Psoas muscle (tissue), 8 donors: ENCODE measurements at regions of chr14 and their contacts with region 1.

Region 1: DNA sequence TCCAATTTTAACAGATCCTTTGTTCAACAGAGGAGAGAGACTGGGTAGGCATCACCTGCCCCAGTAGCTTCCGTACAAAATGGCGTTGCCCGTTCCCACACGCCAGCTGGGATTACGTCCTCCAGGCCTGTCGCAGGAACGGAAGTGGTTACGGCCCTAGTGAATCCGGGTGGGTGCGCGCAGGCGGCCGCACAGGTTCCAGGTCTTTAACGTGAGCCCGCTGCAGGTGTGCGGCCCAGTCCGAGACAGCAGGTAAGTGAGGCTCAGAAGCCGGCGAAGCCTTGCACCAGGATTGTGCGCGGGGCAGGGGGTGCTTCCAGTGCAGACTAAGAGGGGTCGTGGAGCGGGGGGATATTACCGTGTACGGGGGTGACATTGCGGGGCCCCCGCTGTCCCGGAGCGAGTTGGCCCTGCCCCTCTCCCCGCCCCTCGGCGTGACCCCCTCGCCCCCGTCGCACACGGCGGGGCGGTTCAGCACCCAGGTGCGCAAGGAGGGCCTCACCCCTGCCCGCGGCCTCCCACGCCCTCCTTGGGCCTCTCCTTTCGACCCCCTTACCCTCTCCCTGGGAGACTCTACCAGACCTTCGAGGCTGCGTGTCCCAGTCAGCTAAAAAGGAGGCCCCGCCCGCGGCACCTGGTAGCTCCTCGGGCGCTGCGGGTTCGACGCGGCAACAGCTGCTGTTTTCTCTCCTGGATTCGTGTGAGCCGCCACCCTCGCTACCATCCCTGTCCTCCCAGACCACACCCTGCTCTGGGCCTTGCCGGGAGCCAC is at the start of gene EXD2:
- DNase-seq: peak; percentile 87 to 93
- ATAC-seq: peak; percentile 99
- H3K4me3 ChIP-seq: peak within 1 kb of the TSS; percentile 90
- H3K27ac ChIP-seq: peak within 1 kb of the TSS; percentile 88
- H3K4me1 ChIP-seq: peaks cover 9% of the 10 kb centered on the region
- H3K27me3 ChIP-seq: no peaks in the 10 kb centered on the region
- CTCF ChIP-seq: no peak
- total RNA-seq, gene EXD2: 12.6 to 17.3 (median 13.6) TPM

Region 2: DNA sequence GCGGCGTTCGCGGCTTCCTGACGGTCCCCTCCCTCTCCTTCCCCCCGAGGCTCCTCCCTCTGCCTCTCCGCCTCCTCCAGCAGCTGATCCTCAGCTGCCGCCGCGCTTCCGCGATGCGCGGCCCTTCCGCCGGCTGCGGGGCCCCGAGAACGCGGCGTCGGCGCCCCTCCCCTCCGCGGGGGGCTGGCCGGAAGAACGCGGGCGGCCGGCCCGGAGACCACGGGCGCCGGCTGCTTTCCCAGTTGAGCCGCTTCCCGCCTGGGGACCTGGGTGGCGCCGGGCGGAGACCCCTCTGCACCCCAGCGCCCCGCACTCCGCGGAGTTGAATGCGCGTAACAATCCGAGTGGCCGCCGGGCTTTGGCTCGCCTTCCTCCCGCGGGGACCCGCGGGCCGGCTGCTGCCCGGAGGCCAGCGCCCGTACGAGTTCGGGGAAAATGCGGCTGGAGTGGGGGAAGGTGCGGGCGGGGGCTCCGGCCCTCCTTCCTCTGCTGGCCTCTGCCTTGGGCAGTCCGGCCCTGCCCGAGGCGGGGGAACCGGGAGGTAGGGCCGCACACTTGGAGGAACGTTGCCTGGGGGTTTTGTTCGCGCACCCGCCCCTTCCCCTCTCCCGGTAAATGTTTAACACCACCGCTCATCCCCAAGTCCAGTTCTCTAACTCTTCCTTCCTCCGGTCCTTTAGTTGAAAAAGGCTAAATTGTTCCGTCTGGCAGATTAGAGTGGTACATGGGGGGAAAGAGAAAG is 38.2 kb before region 1 on chr14:
- intact Hi-C with region 1: loop called (anchors 5 kb)
- DNase-seq: peak; percentile 94 to 96
- ATAC-seq: peak; percentile 87 to 93 (median 92)
- H3K4me3 ChIP-seq: peak overlapping the region; percentile 98
- H3K27ac ChIP-seq: peak overlapping the region; percentile 97
- H3K4me1 ChIP-seq: peaks cover 23% of the 10 kb centered on the region
- H3K27me3 ChIP-seq: no peaks in the 10 kb centered on the region
- CTCF ChIP-seq: no peak

Region 3: DNA sequence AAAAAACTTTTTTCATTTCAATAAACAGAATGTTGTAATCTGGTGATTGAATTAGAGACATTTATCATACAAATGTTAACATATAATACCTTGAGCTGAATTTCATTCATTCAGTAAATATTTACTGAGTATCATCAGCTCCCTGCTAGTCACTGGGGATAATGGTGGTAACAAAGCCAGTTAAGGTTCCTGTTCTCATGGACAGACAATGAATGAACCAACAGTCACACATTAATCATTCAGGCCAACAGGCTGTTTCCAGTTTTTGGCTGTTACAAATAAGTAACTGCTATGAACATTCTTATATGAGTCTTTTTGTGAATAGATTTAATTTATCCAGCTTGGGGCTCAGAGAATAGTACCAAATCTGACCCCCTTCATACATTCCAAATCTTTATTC is 13.2 kb after region 1 on chr14:
- intact Hi-C with region 1: no loop called
- DNase-seq: no peak
- ATAC-seq: peak in 1 of 4 donors; percentile 48
- H3K4me3 ChIP-seq: no peak overlapping the region
- H3K27ac ChIP-seq: no peak overlapping the region
- H3K4me1 ChIP-seq: peaks cover 5% of the 10 kb centered on the region
- H3K27me3 ChIP-seq: no peaks in the 10 kb centered on the region
- CTCF ChIP-seq: no peak

Region 4: DNA sequence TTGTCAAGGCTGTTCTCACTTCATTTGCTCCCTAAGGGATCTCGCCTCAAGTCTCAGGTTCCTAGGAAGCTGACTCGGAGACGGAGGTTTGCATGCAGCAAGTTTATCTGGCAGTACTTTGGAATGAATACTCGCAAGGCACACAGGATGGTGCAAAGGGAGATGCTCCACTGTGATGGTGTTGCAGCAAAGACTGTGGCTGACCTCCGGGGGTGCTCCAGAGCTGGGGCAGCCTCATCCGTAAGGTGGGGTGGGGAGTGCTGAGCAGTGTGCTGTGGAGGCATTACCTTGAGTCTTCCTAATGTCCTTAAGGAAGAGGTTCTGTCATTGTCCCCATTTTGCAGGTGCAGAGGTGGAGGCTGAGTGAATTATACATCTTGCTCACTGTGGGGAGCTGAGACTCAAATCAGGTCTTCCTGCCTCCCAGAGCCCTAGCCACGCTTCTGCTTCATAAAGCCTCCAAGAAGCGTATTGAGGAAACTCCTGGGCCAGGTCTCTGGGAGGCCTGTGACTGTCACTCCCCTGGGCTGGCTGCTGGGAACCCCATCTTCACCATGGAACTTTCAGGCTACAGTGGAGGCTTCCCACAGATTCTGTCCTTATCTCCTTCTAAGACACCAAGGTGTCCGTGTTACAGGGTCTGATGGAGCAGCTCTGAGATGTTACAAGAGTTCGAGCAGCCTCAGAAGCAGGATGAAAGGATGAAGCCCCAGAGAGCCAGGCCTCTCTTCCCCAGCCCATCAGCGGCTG is 107.9 kb after region 1 on chr14:
- intact Hi-C with region 1: no loop called
- DNase-seq: no peak
- ATAC-seq: no peak
- H3K4me3 ChIP-seq: no peak overlapping the region
- H3K27ac ChIP-seq: no peak overlapping the region
- H3K4me1 ChIP-seq: no peaks in the 10 kb centered on the region
- H3K27me3 ChIP-seq: peaks cover 0 to 3% (median 0%) of the 10 kb centered on the region in 3 donors
- CTCF ChIP-seq: no peak

Region 5: GRCh38 chr14:69460093-69460701 is 268.7 kb after region 1 on chr14:
- intact Hi-C with region 1: no loop called
- DNase-seq: peak; percentile 63 to 67
- ATAC-seq: peak; percentile 91 to 98 (median 93)
- H3K4me3 ChIP-seq: no peak overlapping the region
- H3K27ac ChIP-seq: no peak overlapping the region
- H3K4me1 ChIP-seq: no peaks in the 10 kb centered on the region
- H3K27me3 ChIP-seq: no peaks in the 10 kb centered on the region
- CTCF ChIP-seq: peak; percentile 82